Activated CD4-positive, alpha-beta memory T cell treated with anti-CD3 and anti-CD28 coated beads, Interleukin-2, amount 10 ng/mL, durations not matched to agents 7 days and 5 days (primary cell): ENCODE measurements at regions of chr2 and their contacts with region 1.

Region 1: DNA sequence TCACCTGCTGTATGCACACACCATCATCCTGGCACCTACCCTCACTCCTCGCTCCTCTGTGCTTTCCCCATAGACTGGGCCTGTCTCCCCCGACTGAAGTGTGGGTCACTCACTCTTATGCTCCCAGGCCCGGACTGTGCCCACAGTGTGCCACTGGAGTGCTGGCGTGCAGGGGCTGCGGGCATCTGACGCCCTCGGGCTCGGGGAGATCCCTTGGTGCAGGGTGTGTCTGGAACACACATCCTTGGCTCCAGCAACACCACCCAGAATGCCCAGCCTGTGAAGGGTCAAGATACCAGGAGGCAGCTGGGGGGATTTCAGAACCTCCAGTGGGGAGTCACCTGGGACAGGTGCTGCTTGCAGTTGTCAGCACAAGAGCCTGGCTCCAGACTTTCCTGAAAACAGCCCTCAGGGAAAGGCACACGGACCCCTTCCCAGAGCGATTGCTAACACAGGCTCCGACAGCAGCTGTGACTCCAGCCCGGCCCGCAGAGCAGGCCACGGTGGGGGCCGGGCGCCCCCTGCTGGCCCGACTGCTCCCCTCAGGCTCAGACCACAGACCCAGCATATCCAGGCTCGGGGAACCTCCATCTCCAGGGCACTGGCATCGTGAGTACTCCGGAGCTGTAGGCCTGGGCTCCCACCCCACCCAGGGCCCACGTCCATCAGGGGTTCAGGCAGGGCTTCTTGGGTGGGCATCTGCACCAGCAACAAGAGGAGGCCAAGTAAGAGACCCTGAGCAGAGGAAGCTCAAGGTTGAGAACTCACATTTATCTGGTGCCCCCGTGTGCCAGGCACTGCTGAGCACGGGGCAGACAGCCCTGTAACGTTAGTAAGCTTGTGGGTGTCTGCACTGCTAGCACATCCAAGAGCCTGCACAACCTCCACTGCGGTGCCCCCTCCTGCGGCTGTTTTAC is 8.6 kb downstream of the HS1BP3 start:
- DNase-seq: peak; percentile 79
- H3K4me3 Mint-ChIP-seq: no peak overlapping the region
- H3K27ac Mint-ChIP-seq: no peak overlapping the region
- H3K4me1 Mint-ChIP-seq: no peaks in the 10 kb centered on the region
- H3K27me3 Mint-ChIP-seq: no peaks in the 10 kb centered on the region

Region 2: DNA sequence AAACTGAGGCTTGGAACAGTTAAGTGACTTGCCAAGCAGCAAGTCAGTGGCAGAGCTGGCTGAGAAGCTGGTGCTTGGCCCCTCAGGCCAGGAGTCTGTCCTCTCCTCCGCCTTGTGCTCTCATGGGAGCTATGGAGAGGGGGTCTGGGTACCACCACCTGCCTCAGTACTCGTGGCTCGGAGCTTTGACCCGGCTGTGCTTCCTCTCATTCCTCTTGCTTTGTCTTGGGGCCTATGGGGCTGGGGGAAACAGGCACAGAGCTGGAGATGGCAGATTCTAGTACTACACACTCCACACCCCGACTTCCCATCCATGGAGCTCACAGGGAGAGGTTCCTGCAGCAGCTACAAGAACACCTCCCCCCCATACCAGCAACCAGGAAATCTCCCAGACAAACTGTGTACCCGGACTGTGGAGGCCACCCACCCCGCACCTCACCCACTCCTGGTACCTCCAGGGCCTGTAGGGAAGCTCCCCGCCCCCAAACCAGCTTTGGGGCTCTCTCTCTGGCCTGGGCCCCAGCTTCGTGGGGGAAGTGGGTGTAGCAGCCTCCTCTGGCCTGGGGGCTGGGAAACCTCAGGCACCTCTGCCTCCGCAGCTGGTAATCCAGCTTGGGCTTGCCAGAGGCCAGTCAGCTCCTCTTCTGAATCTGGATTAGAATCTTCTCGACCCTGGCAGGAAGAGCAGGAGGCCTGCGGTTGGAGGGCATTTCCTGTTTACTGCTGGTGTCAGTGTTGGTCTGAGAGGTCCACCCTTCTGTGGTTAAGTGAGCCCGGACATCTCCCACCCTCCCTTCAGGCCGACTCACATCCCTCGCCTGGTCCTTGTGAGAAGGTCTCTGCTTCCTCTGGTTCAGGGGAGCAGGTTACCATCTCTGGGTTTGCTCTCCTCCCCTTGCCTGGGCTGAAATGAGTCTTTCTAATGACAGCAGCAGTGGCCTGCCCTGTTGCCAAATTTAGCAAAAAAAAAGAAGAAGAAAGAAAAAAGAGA is 217.7 kb before region 1 on chr2:
- CTCF ChIA-PET with region 1: interaction called, 14 read pairs
- POLR2A ChIA-PET with region 1: no interaction called
- DNase-seq: peak; percentile 58
- H3K4me3 Mint-ChIP-seq: peak overlapping the region; percentile 3
- H3K27ac Mint-ChIP-seq: peak overlapping the region; percentile 68
- H3K4me1 Mint-ChIP-seq: peaks cover 44% of the 10 kb centered on the region
- H3K27me3 Mint-ChIP-seq: peaks cover 4% of the 10 kb centered on the region

Region 3: GRCh38 chr2:20438334-20439192 is 203.8 kb before region 1 on chr2:
- CTCF ChIA-PET with region 1: interaction called, 52 read pairs
- POLR2A ChIA-PET with region 1: interaction called, 4 read pairs
- DNase-seq: no peak
- H3K4me3 Mint-ChIP-seq: no peak overlapping the region
- H3K27ac Mint-ChIP-seq: no peak overlapping the region
- H3K4me1 Mint-ChIP-seq: peaks cover 3% of the 10 kb centered on the region
- H3K27me3 Mint-ChIP-seq: peaks cover 36% of the 10 kb centered on the region

Region 4: DNA sequence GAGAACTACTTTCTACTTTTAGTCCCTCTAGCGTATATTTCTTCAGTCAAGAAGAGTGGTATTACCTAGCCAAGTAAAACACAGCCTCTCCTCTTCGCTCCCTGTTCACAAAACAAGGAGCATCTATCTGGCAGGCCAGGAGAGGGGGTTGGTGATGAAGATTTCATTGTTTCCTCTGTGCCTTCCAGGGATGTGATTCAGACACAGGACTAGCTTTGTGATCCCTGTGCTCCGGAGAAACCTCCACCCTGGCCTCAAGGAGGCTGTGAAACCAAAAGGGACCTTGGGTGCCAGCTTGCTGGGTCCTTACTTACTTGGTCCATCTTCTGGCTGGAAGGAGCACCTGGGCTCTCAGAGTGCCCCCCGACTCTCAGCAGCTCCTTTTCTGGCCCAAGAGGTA is 189.8 kb before region 1 on chr2:
- CTCF ChIA-PET with region 1: interaction called, 46 read pairs
- POLR2A ChIA-PET with region 1: interaction called, 8 read pairs
- DNase-seq: peak; percentile 11
- H3K4me3 Mint-ChIP-seq: no peak overlapping the region
- H3K27ac Mint-ChIP-seq: no peak overlapping the region
- H3K4me1 Mint-ChIP-seq: peaks cover 4% of the 10 kb centered on the region
- H3K27me3 Mint-ChIP-seq: peaks cover 39% of the 10 kb centered on the region

Region 5: DNA sequence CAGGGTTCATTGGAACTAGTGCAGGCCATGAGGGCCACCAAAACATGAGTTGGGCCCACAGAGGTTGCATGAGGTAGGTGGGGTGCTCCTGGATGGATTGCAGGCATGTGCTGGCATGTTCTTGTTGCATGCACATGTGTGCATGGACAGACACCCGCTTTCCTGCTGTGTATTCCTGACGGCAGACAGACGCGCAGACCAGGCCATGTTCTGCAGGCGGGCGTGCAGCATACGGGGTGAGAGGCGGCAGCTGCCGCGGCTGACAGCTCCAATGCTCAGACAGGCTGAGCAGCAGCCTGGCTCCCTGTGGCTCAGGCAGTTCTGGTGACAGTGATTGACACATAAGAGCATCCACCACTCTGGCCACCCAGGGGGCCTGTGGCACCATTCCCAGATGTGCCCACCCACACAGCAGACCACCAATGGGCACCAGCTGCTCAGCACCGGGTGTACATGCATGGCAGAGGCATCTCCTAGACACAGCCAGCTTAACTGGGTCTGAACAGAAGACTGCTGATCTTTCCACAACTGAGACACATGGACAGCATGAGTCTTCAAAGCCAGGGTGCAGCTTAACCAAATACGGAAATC is 12.6 kb before region 1 on chr2:
- CTCF ChIA-PET with region 1: interaction called, 14 read pairs
- POLR2A ChIA-PET with region 1: interaction called, 3 read pairs
- DNase-seq: no peak
- H3K4me3 Mint-ChIP-seq: no peak overlapping the region
- H3K27ac Mint-ChIP-seq: no peak overlapping the region
- H3K4me1 Mint-ChIP-seq: peaks cover 5% of the 10 kb centered on the region
- H3K27me3 Mint-ChIP-seq: no peaks in the 10 kb centered on the region

Region 6: DNA sequence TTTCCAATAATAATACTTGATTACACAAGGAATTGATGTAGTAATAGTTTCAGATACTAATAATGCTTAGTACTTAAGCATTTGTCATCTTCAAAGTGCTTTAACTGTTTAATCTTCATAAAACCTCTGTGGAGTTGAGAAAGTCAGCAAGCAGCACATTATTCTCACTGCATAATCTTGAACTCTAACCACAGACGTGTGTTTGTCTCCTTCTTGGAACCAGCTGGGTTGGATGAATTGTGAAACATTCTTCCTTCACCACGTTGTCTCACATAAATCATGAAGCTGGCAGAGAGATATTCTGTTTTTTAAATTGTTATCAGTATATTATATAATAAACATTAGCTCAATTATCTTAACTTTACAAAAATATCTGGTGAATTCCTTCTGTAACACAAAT is 235.6 kb after region 1 on chr2:
- CTCF ChIA-PET with region 1: no interaction called
- POLR2A ChIA-PET with region 1: no interaction called
- DNase-seq: no peak
- H3K4me3 Mint-ChIP-seq: no peak overlapping the region
- H3K27ac Mint-ChIP-seq: no peak overlapping the region
- H3K4me1 Mint-ChIP-seq: peaks cover 2% of the 10 kb centered on the region
- H3K27me3 Mint-ChIP-seq: peaks cover 14% of the 10 kb centered on the region